ENCODE measurements at regions of chr4 and their contacts with region 1.

Region 1: GRCh38 chr4:77376788-77377460 is 219.9 kb downstream of the CCNG2 start:
- DNase-seq: no peak
- ATAC-seq: no peak
- H3K4me3 ChIP-seq: no peak overlapping the region
- H3K27ac ChIP-seq: no peak overlapping the region
- H3K4me1 ChIP-seq: no peaks in the 10 kb centered on the region
- H3K27me3 ChIP-seq: peaks cover 0 to 3% of the 10 kb centered on the region in 2 experiments; a peak in 1 of 5 replicates
- CTCF ChIP-seq: 0 out of 6 replicates have a peak, but pooled peaks of 1 of the 3 experiments have one; percentile 27
- EP300 ChIP-seq: no peak
- POLR2A ChIP-seq: no peak
- RAD21 ChIP-seq: no peak

Region 2: DNA sequence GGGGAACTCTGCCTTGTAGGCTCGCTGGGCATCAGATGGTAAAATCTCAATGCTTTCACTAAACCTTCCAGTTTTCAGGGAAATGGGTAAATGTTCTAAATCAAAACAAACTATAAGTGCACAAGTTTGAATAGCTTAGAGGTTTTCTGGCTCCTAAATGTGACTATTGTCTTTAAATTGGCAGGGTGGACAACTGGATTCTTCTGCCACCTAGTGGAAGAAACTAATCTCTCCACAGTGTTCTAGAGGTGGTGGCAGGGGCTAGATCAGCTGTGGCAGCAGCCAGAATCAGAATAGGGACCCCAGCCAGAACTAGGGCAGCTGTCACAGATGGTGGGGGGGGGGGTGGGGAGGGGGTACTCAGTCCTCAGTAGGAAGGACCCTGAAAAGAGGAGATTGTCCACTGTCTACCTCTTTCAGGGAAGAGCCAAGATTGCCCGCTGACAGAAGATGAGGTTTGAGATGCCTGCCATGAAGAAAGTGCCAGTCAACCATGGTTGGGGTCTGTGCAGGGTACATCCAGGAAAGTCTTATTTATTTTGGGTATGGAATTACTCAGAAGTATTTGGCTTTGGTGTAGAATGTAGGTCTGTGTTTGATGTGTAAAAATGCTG is 18.5 kb before region 1 on chr4:
- CTCF ChIA-PET with region 1: no interaction called
- POLR2A ChIA-PET with region 1: no interaction called
- in situ Hi-C with region 1: no loop called
- intact Hi-C with region 1: no loop called
- DNase-seq: peak; percentile 28 to 59 (median 52)
- ATAC-seq: peak; percentile 88
- H3K4me3 ChIP-seq: no peak overlapping the region
- H3K27ac ChIP-seq: no peak overlapping the region
- H3K4me1 ChIP-seq: no peaks in the 10 kb centered on the region
- H3K27me3 ChIP-seq: no peaks in the 10 kb centered on the region; a peak in 1 of 5 replicates
- CTCF ChIP-seq: peak; percentile 48 to 64 (median 64)
- EP300 ChIP-seq: no peak
- POLR2A ChIP-seq: no peak
- RAD21 ChIP-seq: peak; percentile 44 to 54

Region 3: DNA sequence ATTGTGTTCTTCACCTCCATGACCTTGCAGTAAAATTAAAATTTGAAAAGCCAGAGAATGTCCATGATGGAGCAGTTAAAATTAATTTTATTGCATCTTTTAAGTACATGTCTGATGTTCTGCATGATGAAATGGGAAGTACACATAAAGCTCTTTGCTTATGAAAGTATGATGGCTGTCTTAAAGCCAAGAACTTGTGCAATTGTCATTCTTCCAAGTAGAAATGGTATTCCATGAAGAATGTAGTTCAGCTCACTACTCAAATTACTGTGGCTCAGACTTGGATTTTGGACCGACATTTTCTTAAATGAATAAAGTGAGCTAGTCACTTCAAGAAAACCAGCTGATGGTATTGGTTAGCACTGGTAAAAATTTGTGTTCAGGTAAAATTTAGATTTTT is 67.0 kb after region 1 on chr4:
- CTCF ChIA-PET with region 1: no interaction called
- POLR2A ChIA-PET with region 1: no interaction called
- in situ Hi-C with region 1: no loop called
- intact Hi-C with region 1: no loop called
- DNase-seq: no peak
- ATAC-seq: no peak
- H3K4me3 ChIP-seq: no peak overlapping the region
- H3K27ac ChIP-seq: no peak overlapping the region
- H3K4me1 ChIP-seq: no peaks in the 10 kb centered on the region
- H3K27me3 ChIP-seq: no peaks in the 10 kb centered on the region
- CTCF ChIP-seq: no peak
- EP300 ChIP-seq: no peak
- POLR2A ChIP-seq: no peak
- RAD21 ChIP-seq: no peak

Region 4: DNA sequence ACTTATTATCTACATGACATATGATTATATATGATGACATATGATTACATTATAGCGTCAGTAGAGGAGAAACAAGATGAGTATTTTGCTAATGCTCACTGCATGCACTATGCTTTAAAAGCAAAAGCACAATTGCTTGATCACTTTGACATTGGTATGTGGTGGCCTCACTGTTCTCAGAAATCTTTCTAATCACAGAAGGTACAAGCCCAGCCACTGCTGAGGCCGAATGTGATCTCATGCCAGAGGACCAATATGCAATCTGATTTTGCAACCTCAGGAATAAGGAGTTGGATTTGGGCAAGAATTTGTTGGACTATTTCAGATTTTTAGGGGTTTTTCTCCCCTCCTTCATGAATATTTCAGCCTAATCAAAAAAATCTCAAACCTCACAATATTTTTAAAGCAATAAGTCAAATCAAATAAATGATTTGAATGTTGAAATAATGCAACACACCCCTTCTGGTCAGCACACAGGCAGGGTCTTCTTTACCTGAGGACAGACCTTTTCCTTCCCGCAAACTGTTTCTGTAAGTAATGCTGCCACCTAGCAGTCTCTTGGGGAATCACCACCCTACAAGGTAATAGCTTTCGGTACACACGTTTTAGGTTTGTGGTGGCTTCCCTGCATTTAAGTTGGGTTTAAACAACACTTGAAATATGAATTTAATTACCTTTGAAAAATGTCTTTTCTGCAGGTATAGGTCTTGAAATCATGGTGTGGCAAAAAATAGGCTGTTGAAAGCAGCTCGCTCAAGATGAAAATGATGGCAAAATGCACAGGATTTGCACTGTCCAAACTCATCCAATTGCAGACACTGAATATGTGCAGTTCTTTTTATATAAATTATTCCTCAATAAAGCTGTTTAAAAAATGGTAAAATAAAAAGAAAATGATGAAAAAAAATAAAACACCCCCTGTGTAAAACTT is 223.9 kb after region 1 on chr4:
- CTCF ChIA-PET with region 1: no interaction called
- POLR2A ChIA-PET with region 1: no interaction called
- in situ Hi-C with region 1: loop called (anchors 10 kb)
- intact Hi-C with region 1: no loop called
- DNase-seq: peak; percentile 42 to 58 (median 53)
- ATAC-seq: peak; percentile 81
- H3K4me3 ChIP-seq: no peak overlapping the region
- H3K27ac ChIP-seq: no peak overlapping the region
- H3K4me1 ChIP-seq: no peaks in the 10 kb centered on the region
- H3K27me3 ChIP-seq: peaks cover 7 to 8% of the 10 kb centered on the region in 2 experiments; a peak in 3 of 5 replicates
- CTCF ChIP-seq: peak; percentile 62 to 76 (median 74)
- EP300 ChIP-seq: no peak
- POLR2A ChIP-seq: no peak
- RAD21 ChIP-seq: peak in 1 of 2 experiments; percentile 43; a peak in 2 of 4 replicates